T-cell (primary cell): ENCODE measurements at regions of chr1 and their contacts with region 1.

Region 1: GRCh38 chr1:68120136-68120791 is 69.8 kb upstream of the DIRAS3 start:
- DNase-seq: peak in 2 of 35 experiments; percentile 4 to 52
- ATAC-seq: peak in 1 of 4 experiments; percentile 16
- H3K4me3 ChIP-seq: no peak overlapping the region
- H3K4me3 Mint-ChIP-seq: no peak overlapping the region
- H3K27ac ChIP-seq: no peak overlapping the region
- H3K27ac Mint-ChIP-seq: no peak overlapping the region
- H3K4me1 ChIP-seq: peaks cover 0 to 3% of the 10 kb centered on the region in 2 experiments
- H3K4me1 Mint-ChIP-seq: peaks cover 2 to 7% (median 6%) of the 10 kb centered on the region in 3 donors
- H3K27me3 ChIP-seq: peaks cover 0 to 11% of the 10 kb centered on the region in 2 experiments
- H3K27me3 Mint-ChIP-seq: peaks cover 0 to 5% of the 10 kb centered on the region in 2 donors

Region 2: GRCh38 chr1:66166753-66167152 is 1953.5 kb before region 1 on chr1:
- CTCF ChIA-PET with region 1: no interaction called
- POLR2A ChIA-PET with region 1: no interaction called
- DNase-seq: no peak
- ATAC-seq: no peak
- H3K4me3 ChIP-seq: no peak overlapping the region
- H3K4me3 Mint-ChIP-seq: no peak overlapping the region
- H3K27ac ChIP-seq: no peak overlapping the region
- H3K27ac Mint-ChIP-seq: no peak overlapping the region
- H3K4me1 ChIP-seq: peaks cover 0 to 12% of the 10 kb centered on the region in 2 experiments
- H3K4me1 Mint-ChIP-seq: peaks cover 13 to 18% (median 14%) of the 10 kb centered on the region in 3 donors
- H3K27me3 ChIP-seq: peaks cover 0 to 4% of the 10 kb centered on the region in 2 experiments
- H3K27me3 Mint-ChIP-seq: peaks cover 7 to 23% of the 10 kb centered on the region in 2 donors

Region 3: DNA sequence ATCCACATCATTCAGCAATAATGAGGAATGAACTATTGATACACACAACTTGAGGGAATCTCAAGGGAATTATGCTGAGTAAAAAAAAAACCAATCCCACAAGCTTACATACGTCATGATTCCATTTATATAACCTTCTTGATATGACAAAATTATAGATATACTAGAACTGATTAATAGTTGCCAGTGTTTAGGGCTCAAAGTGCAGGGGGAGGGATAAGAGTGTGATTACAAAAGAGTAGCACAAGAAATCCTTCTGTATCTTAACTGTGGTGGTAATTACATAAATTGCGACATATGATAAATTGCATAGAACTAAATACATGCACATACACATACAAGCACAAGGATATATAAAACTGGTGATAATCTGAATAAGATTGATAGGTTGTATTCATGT is 83.3 kb before region 1 on chr1:
- CTCF ChIA-PET with region 1: no interaction called
- POLR2A ChIA-PET with region 1: no interaction called
- DNase-seq: no peak
- ATAC-seq: no peak
- H3K4me3 ChIP-seq: no peak overlapping the region
- H3K4me3 Mint-ChIP-seq: no peak overlapping the region
- H3K27ac ChIP-seq: no peak overlapping the region
- H3K27ac Mint-ChIP-seq: no peak overlapping the region
- H3K4me1 ChIP-seq: no peaks in the 10 kb centered on the region
- H3K4me1 Mint-ChIP-seq: no peaks in the 10 kb centered on the region
- H3K27me3 ChIP-seq: no peaks in the 10 kb centered on the region
- H3K27me3 Mint-ChIP-seq: peaks cover 0 to 4% of the 10 kb centered on the region in 2 donors

Region 4: DNA sequence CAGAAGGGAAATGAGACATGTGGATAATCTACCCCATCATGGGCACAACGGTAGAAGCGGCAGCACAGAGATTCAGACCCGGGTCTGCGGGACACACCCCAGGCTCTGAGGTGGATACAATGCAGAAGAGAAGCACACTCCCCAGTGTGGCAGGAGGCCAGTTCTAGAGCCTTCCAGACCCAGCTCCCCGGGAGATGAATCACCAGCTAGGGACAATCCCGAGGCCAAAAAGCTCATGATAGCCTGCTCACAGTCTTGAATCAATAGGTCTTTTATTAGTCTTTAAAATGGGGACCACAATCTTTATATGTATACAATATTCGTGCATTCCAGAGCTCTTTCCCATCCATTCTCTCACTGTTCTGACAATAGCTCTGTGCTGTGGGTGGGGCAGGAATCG is 12.5 kb before region 1 on chr1:
- CTCF ChIA-PET with region 1: interaction called, 7 to 13 read pairs
- POLR2A ChIA-PET with region 1: no interaction called
- DNase-seq: no peak
- ATAC-seq: no peak
- H3K4me3 ChIP-seq: no peak overlapping the region
- H3K4me3 Mint-ChIP-seq: no peak overlapping the region
- H3K27ac ChIP-seq: no peak overlapping the region
- H3K27ac Mint-ChIP-seq: no peak overlapping the region
- H3K4me1 ChIP-seq: no peaks in the 10 kb centered on the region
- H3K4me1 Mint-ChIP-seq: no peaks in the 10 kb centered on the region
- H3K27me3 ChIP-seq: peaks cover 0 to 6% of the 10 kb centered on the region in 2 experiments
- H3K27me3 Mint-ChIP-seq: peaks cover 18 to 19% of the 10 kb centered on the region in 2 donors

Region 5: DNA sequence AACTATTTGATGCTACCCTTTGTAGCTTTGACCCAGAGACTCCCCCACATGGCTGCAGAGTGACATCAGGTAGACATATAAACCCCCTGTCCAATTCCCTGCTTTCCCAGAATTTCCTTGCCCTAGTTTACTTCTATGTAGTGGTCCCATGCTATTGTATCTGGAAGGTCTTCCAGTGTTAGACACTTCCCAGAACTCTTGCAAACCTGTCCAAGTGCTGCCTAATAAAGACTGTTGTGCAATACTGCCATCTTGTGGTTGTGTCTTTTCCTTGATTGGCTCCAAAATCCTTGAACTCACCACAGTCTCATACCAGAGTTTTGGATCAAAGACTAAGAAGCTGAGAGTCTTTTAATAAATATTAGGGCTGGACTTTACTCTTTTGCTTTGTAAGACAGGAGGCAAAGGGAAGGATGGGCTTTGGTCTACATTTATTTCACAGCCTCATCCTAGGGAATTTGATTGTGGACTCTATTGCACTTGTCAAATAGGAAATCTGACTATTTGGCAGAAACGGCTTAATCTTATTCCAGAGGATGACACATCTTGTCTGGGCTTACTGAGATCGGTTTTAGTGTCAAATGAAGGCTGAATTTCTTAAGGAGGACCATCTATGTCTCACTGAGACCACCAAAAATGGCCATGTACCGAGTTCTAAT is 1617.4 kb after region 1 on chr1:
- CTCF ChIA-PET with region 1: interaction called in 1 of 2 experiments, 11 read pairs
- POLR2A ChIA-PET with region 1: no interaction called
- DNase-seq: peak in 1 of 35 experiments; percentile 59
- ATAC-seq: no peak
- H3K4me3 ChIP-seq: no peak overlapping the region
- H3K4me3 Mint-ChIP-seq: no peak overlapping the region
- H3K27ac ChIP-seq: no peak overlapping the region
- H3K27ac Mint-ChIP-seq: no peak overlapping the region
- H3K4me1 ChIP-seq: no peaks in the 10 kb centered on the region
- H3K4me1 Mint-ChIP-seq: peaks cover 0 to 1% (median 0%) of the 10 kb centered on the region in 3 donors
- H3K27me3 ChIP-seq: no peaks in the 10 kb centered on the region
- H3K27me3 Mint-ChIP-seq: peaks cover 0 to 1% of the 10 kb centered on the region in 2 donors